Heart left ventricle (tissue), 16 donors: ENCODE measurements at regions of chr1 and their contacts with region 1.

Region 1: DNA sequence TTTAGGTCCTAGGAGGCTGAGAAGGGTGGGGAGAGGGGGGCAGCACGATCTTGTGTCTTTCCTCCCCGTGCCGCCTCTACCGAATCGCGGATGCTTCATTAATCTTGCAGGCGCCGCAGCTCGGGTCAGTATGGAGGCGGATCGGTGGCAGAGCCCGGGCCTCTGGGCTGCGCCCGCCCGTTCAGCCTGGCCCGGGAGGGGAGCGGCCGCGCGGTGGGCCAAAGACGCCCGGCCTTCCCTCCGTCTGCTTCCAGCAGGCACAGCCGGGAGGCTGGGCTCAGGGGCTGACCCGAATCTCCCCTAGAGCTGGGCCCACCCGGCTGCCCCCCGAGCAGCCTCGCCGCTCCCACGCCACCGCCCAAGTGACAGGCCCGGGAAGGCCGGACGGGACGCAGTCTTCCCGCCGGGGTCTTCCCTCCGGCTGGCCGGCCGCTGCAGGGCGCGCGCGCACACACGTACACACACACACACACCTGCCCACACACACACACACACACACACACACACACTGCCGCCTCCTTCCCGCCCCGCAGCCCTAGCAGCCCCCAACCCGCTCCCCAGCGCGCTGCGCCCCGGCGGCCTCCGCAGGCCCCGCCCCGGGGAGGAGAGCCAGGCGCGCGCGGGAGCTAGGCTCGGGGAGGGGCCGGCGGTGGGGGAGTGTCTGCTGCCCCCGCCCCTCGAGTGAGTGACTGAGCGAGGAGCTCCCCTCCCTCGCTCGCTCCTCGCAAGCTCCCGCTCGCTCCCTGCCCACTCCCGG is at the start of gene C1orf21:
- DNase-seq: peak; percentile 93 to 94 (median 93)
- ATAC-seq: peak; percentile 91 to 97 (median 95)
- H3K4me3 ChIP-seq: peak within 1 kb of the TSS; percentile 85 to 99 (median 94)
- H3K27ac ChIP-seq: peak within 1 kb of the TSS; percentile 84 to 97 (median 92)
- H3K4me1 ChIP-seq: peaks cover 0 to 38% (median 29%) of the 10 kb centered on the region in 12 donors
- H3K27me3 ChIP-seq: no peaks in the 10 kb centered on the region
- CTCF ChIP-seq: no peak
- POLR2A ChIP-seq: peak; percentile 80 to 94
- total RNA-seq, gene C1orf21: 57.5 to 81.3 (median 69.2) TPM

Region 2: DNA sequence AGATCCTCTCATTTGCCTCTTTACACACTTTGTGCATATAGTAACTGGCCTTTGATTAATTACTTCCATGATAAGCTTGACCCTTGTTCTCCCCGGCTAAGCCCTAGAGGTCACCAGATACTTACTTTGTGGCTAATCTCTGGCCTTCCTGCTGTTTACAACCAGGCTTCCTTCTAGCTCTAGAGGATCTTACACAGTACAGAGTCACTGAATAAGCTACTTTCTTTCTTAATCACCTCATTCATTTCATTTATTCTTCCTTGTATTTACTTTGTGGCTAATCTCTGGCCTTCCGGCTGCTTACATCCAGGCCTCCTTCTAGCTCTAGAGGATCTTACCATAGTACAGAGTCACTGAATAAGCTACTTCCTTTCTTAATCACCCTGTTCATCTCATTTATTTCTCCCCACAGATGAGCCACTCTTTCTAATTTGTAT is 144.0 kb before region 1 on chr1:
- intact Hi-C with region 1: loop called in 3 of 10 experiments (anchors 5 to 10 kb)
- DNase-seq: peak in 1 of 5 donors; percentile 19
- ATAC-seq: peak; percentile 82 to 92 (median 86)
- H3K4me3 ChIP-seq: no peak overlapping the region
- H3K27ac ChIP-seq: peak overlapping the region in 3 of 12 donors; percentile 24 to 59 (median 35)
- H3K4me1 ChIP-seq: peaks cover 0 to 20% (median 4%) of the 10 kb centered on the region in 12 donors
- H3K27me3 ChIP-seq: no peaks in the 10 kb centered on the region
- CTCF ChIP-seq: peak; percentile 0 to 66 (median 49)
- POLR2A ChIP-seq: no peak

Region 3: GRCh38 chr1:184255560-184255959 is 130.9 kb before region 1 on chr1:
- intact Hi-C with region 1: loop called in 1 of 10 experiments (anchors 5 kb)
- DNase-seq: no peak
- ATAC-seq: peak in 1 of 4 donors; percentile 48
- H3K4me3 ChIP-seq: no peak overlapping the region
- H3K27ac ChIP-seq: peak overlapping the region in 1 of 12 donors; percentile 11
- H3K4me1 ChIP-seq: peaks cover 0 to 19% (median 4%) of the 10 kb centered on the region in 12 donors
- H3K27me3 ChIP-seq: no peaks in the 10 kb centered on the region
- CTCF ChIP-seq: no peak
- POLR2A ChIP-seq: no peak

Region 4: DNA sequence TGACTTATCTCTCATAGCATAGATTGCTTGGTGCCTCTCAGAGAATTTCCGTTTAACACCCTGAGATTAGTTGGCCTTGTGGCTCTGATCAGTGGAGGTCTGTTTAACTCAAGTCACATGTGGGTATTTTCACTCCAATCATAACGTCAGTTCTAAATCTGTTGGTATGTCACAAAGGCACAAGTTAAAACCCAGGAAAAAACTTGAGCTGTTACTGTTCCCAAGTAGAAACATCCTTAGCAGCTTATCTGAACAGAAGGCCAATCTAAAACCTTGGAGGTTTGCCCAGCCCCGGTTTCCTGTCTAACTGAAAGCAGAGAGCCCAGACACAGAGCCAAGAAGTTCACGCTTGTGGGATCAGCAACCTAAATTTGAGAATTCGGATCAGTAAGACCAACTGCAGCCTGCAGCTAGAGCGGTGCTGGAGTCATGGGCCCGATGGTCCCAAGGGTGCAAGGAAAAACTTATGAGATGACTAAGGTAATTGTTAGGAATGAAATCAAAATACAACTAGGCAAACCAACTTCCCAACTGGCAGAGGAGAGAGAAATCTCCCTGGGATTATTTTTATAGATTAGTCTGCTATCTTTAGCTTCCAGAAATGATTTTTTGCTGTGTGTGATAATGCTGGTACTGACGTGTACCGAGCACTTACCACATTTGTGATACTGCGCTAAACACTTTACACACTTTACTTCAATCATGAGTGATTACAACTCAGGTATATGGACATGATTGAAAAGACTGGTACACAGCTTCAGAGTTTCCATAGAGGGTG is 89.8 kb before region 1 on chr1:
- intact Hi-C with region 1: loop called in 4 of 10 experiments (anchors 5 to 10 kb)
- DNase-seq: peak; percentile 83 to 96 (median 95)
- ATAC-seq: peak; percentile 91 to 95 (median 93)
- H3K4me3 ChIP-seq: peak overlapping the region in 7 of 12 donors; percentile 0 to 27 (median 21)
- H3K27ac ChIP-seq: peak overlapping the region; percentile 79 to 92 (median 86)
- H3K4me1 ChIP-seq: peaks cover 2 to 58% (median 39%) of the 10 kb centered on the region in 12 donors
- H3K27me3 ChIP-seq: no peaks in the 10 kb centered on the region
- CTCF ChIP-seq: no peak
- POLR2A ChIP-seq: no peak

Region 5: DNA sequence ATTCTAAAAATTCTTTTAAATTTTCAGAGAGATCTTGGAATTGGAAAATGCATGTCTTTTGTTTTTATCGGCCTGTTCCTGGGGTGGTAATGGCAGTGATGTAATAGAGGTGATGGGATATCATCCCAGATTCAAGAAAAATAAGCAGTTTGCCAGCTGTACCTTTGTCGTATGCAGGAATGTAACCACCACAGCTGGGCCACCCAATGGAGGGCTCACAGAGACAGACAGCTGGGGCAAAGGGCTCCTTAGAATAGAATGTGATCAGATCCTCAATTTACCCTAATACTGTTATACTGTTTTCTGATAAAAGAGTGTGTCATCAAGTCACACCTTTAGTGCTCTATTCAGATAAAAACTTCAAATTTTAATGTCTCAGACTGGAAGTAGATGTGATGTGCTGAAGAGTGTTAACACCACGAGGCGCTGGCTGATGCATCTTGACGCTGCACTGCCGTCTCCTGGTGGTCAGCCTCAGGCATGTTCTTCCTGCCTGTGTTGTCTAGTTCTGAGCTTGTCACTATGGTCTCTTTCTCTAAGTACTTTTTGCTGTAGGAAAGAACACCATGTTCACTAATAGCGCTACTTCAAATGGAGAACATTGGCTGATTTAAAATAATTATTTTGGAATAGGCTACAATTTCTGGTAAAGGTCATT is 79.1 kb after region 1 on chr1:
- intact Hi-C with region 1: loop called in 2 of 10 experiments (anchors 5 kb)
- DNase-seq: peak in 2 of 5 donors; percentile 60 to 66
- ATAC-seq: peak; percentile 65 to 84 (median 74)
- H3K4me3 ChIP-seq: no peak overlapping the region
- H3K27ac ChIP-seq: peak overlapping the region in 5 of 12 donors; percentile 23 to 59 (median 45)
- H3K4me1 ChIP-seq: peaks cover 2 to 66% (median 34%) of the 10 kb centered on the region in 12 donors
- H3K27me3 ChIP-seq: no peaks in the 10 kb centered on the region
- CTCF ChIP-seq: peak in 11 of 12 donors; percentile 6 to 58 (median 39)
- POLR2A ChIP-seq: no peak

Region 6: GRCh38 chr1:184483101-184483683 is 96.7 kb after region 1 on chr1:
- intact Hi-C with region 1: loop called in 2 of 10 experiments (anchors 5 kb)
- DNase-seq: peak in 2 of 5 donors; percentile 57
- ATAC-seq: peak in 3 of 4 donors; percentile 33 to 60 (median 33)
- H3K4me3 ChIP-seq: no peak overlapping the region
- H3K27ac ChIP-seq: peak overlapping the region; percentile 17 to 79 (median 70)
- H3K4me1 ChIP-seq: peaks cover 11 to 86% (median 71%) of the 10 kb centered on the region in 12 donors
- H3K27me3 ChIP-seq: no peaks in the 10 kb centered on the region
- CTCF ChIP-seq: peak in 7 of 12 donors; percentile 8 to 40 (median 21)
- POLR2A ChIP-seq: no peak